Mammary epithelial cell (primary cell): ENCODE measurements at regions of chr11 and their contacts with region 1.

Region 1: DNA sequence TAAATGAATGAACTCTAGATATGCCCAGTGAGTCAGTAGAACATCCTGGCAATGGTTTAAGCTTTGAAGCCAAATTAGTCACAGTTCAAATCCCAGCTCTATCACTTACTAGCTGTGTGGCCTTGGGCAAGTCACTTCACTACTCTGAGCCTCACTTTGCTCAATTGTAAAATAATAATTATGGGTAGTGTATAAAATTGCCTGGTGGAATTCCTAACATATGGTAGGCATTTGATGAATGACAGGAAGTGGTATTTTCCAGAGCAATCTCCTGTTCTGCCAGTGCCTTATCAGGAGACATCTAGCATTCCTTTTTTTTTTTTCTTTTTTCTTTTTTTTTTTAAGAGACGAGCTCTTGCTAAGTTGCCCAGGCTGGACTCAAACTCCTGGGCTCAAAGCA is 13.0 kb downstream of the SCN4B start:
- DNase-seq: no peak
- H3K4me3 ChIP-seq: no peak overlapping the region
- H3K27ac ChIP-seq: no peak overlapping the region
- H3K4me1 ChIP-seq: peaks cover 20% of the 10 kb centered on the region
- H3K27me3 ChIP-seq: no peaks in the 10 kb centered on the region
- CTCF ChIP-seq: no peak

Region 2: GRCh38 chr11:118304568-118305248 is 165.1 kb after region 1 on chr11 and contains the start of gene CD3E:
- CTCF ChIA-PET with region 1: no interaction called
- dilution Hi-C with region 1: loop called (anchors 10 kb)
- in situ Hi-C with region 1: no loop called
- intact Hi-C with region 1: no loop called
- DNase-seq: no peak
- H3K4me3 ChIP-seq: no peak within 1 kb of the TSS
- H3K27ac ChIP-seq: no peak within 1 kb of the TSS
- H3K4me1 ChIP-seq: no peaks in the 10 kb centered on the region
- H3K27me3 ChIP-seq: no peaks in the 10 kb centered on the region
- CTCF ChIP-seq: no peak
- total RNA-seq, gene CD3E: not detected